ENCODE measurements at regions of chr2 and their contacts with region 1.

Region 1: GRCh38 chr2:73163483-73164367 is 38.6 kb upstream of the NOTO start:
- DNase-seq: peak; percentile 44 to 74 (median 52)
- ATAC-seq: peak; percentile 42 to 94 (median 80)
- H3K4me3 ChIP-seq: no peak overlapping the region
- H3K27ac ChIP-seq: no peak overlapping the region
- H3K4me1 ChIP-seq: no peaks in the 10 kb centered on the region
- H3K27me3 ChIP-seq: peaks cover 0 to 7% (median 0%) of the 10 kb centered on the region in 9 donors
- CTCF ChIP-seq: peak; percentile 74 to 90 (median 84)
- POLR2A ChIP-seq: no peak

Region 2: GRCh38 chr2:72993147-72993932 is 170.4 kb before region 1 on chr2:
- intact Hi-C with region 1: loop called in 8 of 10 experiments (anchors 1 to 5 kb)
- DNase-seq: peak in 1 of 5 donors; percentile 23
- ATAC-seq: peak in 2 of 4 donors; percentile 12 to 36
- H3K4me3 ChIP-seq: no peak overlapping the region
- H3K27ac ChIP-seq: no peak overlapping the region
- H3K4me1 ChIP-seq: peaks cover 0 to 11% (median 2%) of the 10 kb centered on the region in 12 donors
- H3K27me3 ChIP-seq: no peaks in the 10 kb centered on the region
- CTCF ChIP-seq: peak; percentile 64 to 87 (median 78)
- POLR2A ChIP-seq: no peak

Region 3: DNA sequence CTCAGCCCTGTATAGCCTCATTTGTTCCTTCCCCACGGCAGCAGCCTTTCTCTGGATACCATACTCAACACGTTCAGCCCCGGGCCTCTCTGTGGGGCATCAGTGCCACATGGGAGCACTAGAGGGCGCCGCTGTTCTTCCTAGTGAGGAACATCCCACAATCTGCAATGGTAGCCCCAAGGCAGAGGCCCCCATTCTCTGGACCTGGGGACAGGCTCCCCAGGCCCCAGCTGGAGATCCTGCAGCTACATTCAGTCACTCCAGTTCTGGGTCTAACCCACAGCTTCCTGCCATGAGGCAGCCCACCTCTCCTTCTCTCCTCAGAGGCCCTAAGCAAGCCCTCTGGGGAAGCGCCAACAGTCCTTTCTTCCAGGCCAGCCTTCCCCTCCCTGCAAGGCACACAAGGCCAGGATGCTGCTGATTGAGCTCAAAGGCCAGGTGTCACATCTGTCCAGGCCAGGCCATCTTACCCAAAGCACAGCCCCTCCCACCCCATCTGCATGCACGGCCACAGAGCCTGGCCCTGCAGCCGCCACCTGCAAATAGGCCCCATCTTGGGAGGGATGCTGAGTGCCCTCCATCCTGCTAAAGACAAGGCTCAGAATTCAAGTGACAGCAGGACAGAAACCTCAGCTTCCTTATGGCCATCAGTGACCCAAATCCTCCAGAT is 77.9 kb before region 1 on chr2:
- intact Hi-C with region 1: loop called in 1 of 10 experiments (anchors 2 kb)
- DNase-seq: peak; percentile 73 to 89 (median 80)
- ATAC-seq: peak; percentile 28 to 80 (median 68)
- H3K4me3 ChIP-seq: no peak overlapping the region
- H3K27ac ChIP-seq: no peak overlapping the region
- H3K4me1 ChIP-seq: peaks cover 0 to 42% (median 18%) of the 10 kb centered on the region in 12 donors
- H3K27me3 ChIP-seq: no peaks in the 10 kb centered on the region
- CTCF ChIP-seq: peak; percentile 88 to 99 (median 94)
- POLR2A ChIP-seq: no peak

Measured in heart left ventricle (tissue), 16 donors.